Sigmoid colon (tissue), 7 donors: ENCODE measurements at regions of chr3 and their contacts with region 1.

Region 1: DNA sequence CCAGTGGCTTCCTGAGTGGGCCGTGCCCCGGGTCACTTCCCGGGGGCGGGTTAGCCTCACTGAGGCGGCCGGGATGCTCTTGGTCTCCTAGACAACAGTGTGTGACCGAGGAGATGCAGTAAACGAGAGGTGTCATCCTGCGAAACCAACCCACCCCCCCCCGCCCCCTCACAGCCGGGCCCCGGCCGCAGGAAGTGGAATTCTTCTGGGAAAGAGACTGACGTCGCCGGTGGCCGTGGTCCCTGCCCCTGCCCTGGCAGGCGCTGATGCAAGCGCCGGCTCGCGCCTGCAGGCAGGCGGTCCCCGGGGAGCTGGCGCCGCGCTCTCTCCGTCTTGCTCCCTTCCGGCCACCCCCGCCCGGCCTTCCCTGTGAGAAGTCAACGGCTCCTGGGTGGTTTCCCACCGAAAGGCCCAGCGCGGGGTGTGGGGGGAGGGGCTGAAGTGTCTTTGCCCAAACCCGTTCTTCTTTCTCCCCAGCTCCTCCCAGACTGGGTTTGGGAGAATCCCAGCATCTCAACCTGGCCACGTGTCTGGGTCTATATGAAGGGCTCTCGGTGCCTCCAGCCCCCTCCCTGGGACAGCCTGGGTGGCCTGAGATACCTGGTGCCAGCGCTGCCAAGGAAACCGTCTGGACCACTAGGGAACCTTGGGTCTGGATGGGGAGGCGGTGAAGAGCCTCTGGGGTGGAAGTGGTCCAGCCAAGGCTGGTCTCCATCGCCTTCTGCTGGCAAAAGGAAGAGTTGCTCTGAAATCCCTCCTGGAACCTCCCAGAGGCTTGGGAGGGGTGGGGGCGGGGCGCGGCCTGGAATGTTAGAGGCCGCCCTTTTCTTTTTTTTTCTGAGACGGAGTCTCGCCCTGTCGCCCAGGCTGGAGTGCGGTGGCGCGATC is 47.3 kb downstream of the BHLHE40 start:
- DNase-seq: peak; percentile 94
- H3K4me3 ChIP-seq: peak overlapping the region; percentile 35 to 64 (median 56)
- H3K27ac ChIP-seq: peak overlapping the region; percentile 68 to 91 (median 78)
- H3K4me1 ChIP-seq: peaks cover 0 to 18% (median 7%) of the 10 kb centered on the region in 4 donors
- H3K27me3 ChIP-seq: no peaks in the 10 kb centered on the region
- CTCF ChIP-seq: peak; percentile 65 to 80 (median 74)
- EP300 ChIP-seq: peak in 2 of 4 donors; percentile 34 to 55
- POLR2A ChIP-seq: no peak

Region 2: GRCh38 chr3:4963669-4964589 is 62.6 kb before region 1 on chr3:
- intact Hi-C with region 1: no loop called
- DNase-seq: no peak
- H3K4me3 ChIP-seq: no peak overlapping the region
- H3K27ac ChIP-seq: no peak overlapping the region
- H3K4me1 ChIP-seq: no peaks in the 10 kb centered on the region
- H3K27me3 ChIP-seq: no peaks in the 10 kb centered on the region
- CTCF ChIP-seq: no peak
- EP300 ChIP-seq: no peak
- POLR2A ChIP-seq: no peak

Region 3: GRCh38 chr3:4986782-4987537 is 39.6 kb before region 1 on chr3:
- intact Hi-C with region 1: loop called (anchors 2 kb)
- DNase-seq: peak; percentile 99
- H3K4me3 ChIP-seq: peak overlapping the region; percentile 21 to 54 (median 46)
- H3K27ac ChIP-seq: peak overlapping the region; percentile 98 to 99 (median 98)
- H3K4me1 ChIP-seq: peaks cover 0 to 65% (median 56%) of the 10 kb centered on the region in 4 donors
- H3K27me3 ChIP-seq: no peaks in the 10 kb centered on the region
- CTCF ChIP-seq: no peak
- EP300 ChIP-seq: peak; percentile 75 to 99 (median 90)
- POLR2A ChIP-seq: peak; percentile 51 to 55

Region 4: GRCh38 chr3:5053021-5053831 is 26.7 kb after region 1 on chr3:
- intact Hi-C with region 1: no loop called
- DNase-seq: peak; percentile 63
- H3K4me3 ChIP-seq: no peak overlapping the region
- H3K27ac ChIP-seq: peak overlapping the region in 2 of 4 donors; percentile 5 to 60
- H3K4me1 ChIP-seq: peaks cover 0 to 21% (median 6%) of the 10 kb centered on the region in 4 donors
- H3K27me3 ChIP-seq: no peaks in the 10 kb centered on the region
- CTCF ChIP-seq: no peak
- EP300 ChIP-seq: no peak
- POLR2A ChIP-seq: no peak